HepG2 (cell line): ENCODE measurements at regions of chr4 and their contacts with region 1.

Region 1: GRCh38 chr4:108620101-108620932 is at the start of gene RPL34:
- DNase-seq: peak; percentile 97
- ATAC-seq: peak; percentile 99
- H3K4me3 ChIP-seq: peak within 1 kb of the TSS; percentile 84 to 94 (median 85)
- H3K27ac ChIP-seq: peak within 1 kb of the TSS; percentile 86
- H3K4me1 ChIP-seq: peaks cover 44% of the 10 kb centered on the region
- H3K27me3 ChIP-seq: peaks cover 0 to 5% of the 10 kb centered on the region in 2 experiments; a peak in 1 of 5 replicates
- CTCF ChIP-seq: no peak
- EP300 ChIP-seq: 0 out of 4 replicates have a peak, but pooled peaks have one; percentile 5 to 42
- POLR2A ChIP-seq: peak; percentile 91 to 99
- RAD21 ChIP-seq: no peak
- total RNA-seq, gene RPL34: 2,235 and 2,856 TPM in 2 replicates

Region 2: GRCh38 chr4:108320061-108320460 is 300.3 kb before region 1 on chr4:
- CTCF ChIA-PET with region 1: no interaction called
- POLR2A ChIA-PET with region 1: no interaction called
- in situ Hi-C with region 1: no loop called
- intact Hi-C with region 1: no loop called
- DNase-seq: no peak
- ATAC-seq: no peak
- H3K4me3 ChIP-seq: no peak overlapping the region
- H3K27ac ChIP-seq: no peak overlapping the region
- H3K4me1 ChIP-seq: no peaks in the 10 kb centered on the region
- H3K27me3 ChIP-seq: no peaks in the 10 kb centered on the region
- CTCF ChIP-seq: no peak
- EP300 ChIP-seq: no peak
- POLR2A ChIP-seq: no peak
- RAD21 ChIP-seq: no peak

Region 3: GRCh38 chr4:108650212-108651013 is 30.1 kb after region 1 on chr4 and contains the start of gene OSTC:
- CTCF ChIA-PET with region 1: no interaction called
- POLR2A ChIA-PET with region 1: interaction called, 37 read pairs
- in situ Hi-C with region 1: no loop called
- intact Hi-C with region 1: loop called (anchors 1 kb)
- DNase-seq: peak; percentile 94
- ATAC-seq: peak; percentile 93
- H3K4me3 ChIP-seq: peak within 1 kb of the TSS; percentile 79 to 99 (median 92)
- H3K27ac ChIP-seq: peak within 1 kb of the TSS; percentile 99
- H3K4me1 ChIP-seq: peaks cover 42% of the 10 kb centered on the region
- H3K27me3 ChIP-seq: no peaks in the 10 kb centered on the region; a peak in 1 of 5 replicates
- CTCF ChIP-seq: peak; percentile 28
- EP300 ChIP-seq: peak in 1 of 2 experiments; percentile 100; a peak in 1 of 4 replicates
- POLR2A ChIP-seq: peak; percentile 90 to 92
- RAD21 ChIP-seq: no peak; the same call in 1 of the 2 replicates
- total RNA-seq, gene OSTC: 333 and 380 TPM in 2 replicates

Region 4: GRCh38 chr4:108849611-108850168 is 229.4 kb after region 1 on chr4:
- CTCF ChIA-PET with region 1: no interaction called
- POLR2A ChIA-PET with region 1: no interaction called
- in situ Hi-C with region 1: no loop called
- intact Hi-C with region 1: no loop called
- DNase-seq: no peak
- ATAC-seq: no peak
- H3K4me3 ChIP-seq: no peak overlapping the region
- H3K27ac ChIP-seq: no peak overlapping the region
- H3K4me1 ChIP-seq: no peaks in the 10 kb centered on the region
- H3K27me3 ChIP-seq: no peaks in the 10 kb centered on the region
- CTCF ChIP-seq: no peak
- EP300 ChIP-seq: no peak
- POLR2A ChIP-seq: no peak
- RAD21 ChIP-seq: no peak